BJ (cell line): ENCODE measurements at regions of chr1 and their contacts with region 1.

Region 1: GRCh38 chr1:183506561-183506960 is 34.3 kb downstream of the SMG7 start:
- DNase-seq: no peak
- H3K4me3 ChIP-seq: no peak overlapping the region
- H3K27me3 ChIP-seq: no peaks in the 10 kb centered on the region
- CTCF ChIP-seq: no peak

Region 2: GRCh38 chr1:183580281-183580682 is 73.7 kb after region 1 on chr1:
- CTCF ChIA-PET with region 1: no interaction called
- POLR2A ChIA-PET with region 1: interaction called, 10 read pairs
- DNase-seq: no peak
- H3K4me3 ChIP-seq: no peak overlapping the region
- H3K27me3 ChIP-seq: no peaks in the 10 kb centered on the region; the same call in 1 of the 2 replicates
- CTCF ChIP-seq: peak; percentile 23; the same call in 1 of the 2 replicates